ENCODE measurements at regions of chr2 and their contacts with region 1.

Region 1: DNA sequence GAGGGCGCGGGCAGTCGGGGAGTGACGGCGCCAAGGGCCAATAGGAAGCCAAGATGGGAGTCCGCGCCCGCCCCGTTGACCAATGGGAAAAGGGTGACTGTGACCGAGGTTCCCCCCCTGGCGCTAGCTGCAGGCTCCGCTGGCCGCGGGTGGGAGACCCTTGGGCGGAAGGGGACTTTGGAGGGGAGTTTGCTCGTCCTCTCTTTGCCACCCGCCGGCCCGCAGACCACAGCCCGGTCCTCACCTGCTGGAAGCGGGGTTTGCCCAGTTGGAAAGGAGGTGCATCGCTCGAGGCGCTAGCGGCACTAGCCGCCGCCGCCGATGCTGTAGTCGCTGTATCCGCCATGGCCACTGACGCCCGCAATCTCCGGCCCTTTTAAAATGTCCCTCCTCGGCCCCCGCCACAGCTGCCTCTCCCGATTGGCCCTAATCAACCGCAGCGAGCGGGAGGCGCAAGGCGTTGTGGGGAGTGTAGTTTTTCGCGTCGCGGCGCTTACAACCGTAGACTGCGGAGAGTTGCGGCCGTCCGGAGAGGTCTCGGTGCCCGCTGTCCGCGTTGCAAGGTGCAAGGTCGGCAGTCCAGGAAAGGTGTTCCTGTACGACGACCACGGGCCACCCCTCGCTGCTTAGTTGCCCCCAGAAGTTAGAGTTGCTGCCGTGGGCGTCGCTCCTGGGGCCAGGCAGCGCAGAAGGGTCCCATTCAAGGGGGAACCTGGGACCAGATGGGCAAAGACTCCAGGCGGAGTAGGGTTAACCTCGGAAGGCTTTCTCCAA is at the start of gene SFXN5:
- DNase-seq: peak; percentile 98 to 100 (median 99)
- ATAC-seq: peak; percentile 96 to 98 (median 96)
- H3K4me3 ChIP-seq: peak within 1 kb of the TSS; percentile 57 to 99 (median 87)
- H3K27ac ChIP-seq: peak within 1 kb of the TSS; percentile 74 to 98 (median 93)
- H3K4me1 ChIP-seq: peaks cover 3 to 39% (median 21%) of the 10 kb centered on the region in 12 donors
- H3K27me3 ChIP-seq: no peaks in the 10 kb centered on the region
- CTCF ChIP-seq: peak in 8 of 12 donors; percentile 13 to 50 (median 30)
- POLR2A ChIP-seq: no peak
- total RNA-seq, gene SFXN5: 6.0 to 12.5 (median 9.1) TPM

Region 2: DNA sequence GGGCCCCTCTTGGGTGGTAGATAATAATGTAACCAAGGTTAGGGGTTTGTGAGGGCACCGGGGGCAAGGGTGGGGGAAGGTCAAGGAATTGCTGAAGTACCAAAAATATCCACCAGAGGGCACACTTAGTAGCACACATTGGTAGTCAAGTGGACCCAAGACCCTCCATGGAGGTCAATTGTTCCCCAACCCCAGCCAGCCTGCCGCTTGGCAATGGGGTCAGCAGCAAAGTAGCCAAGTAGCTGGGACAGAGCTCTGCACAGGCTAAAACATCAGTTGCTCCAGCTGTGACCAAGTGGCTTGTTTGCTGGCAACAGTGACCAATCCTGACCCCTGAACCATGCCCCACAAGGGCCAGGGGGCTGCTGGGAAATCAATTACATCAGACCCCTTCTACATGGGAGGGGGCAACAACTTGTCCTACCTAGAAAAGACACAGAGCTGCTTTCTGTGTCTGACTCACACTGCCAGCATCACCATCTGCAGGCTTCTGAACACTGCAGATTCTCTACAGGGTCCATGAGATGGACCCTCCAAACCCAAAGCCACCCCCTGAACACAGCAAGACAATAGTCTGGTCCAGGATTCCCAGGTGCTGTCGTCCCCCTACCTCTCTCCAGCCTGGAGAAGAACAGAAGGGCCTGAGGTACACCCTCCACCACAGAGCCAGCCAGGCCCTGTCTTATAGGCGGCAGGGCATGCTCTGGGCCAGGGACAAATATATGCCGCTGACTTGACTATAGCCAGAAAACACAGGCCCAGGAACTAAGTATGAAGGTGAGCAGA is 78.2 kb before region 1 on chr2:
- intact Hi-C with region 1: loop called in 5 of 10 experiments (anchors 2 to 5 kb)
- DNase-seq: peak in 1 of 5 donors; percentile 23
- ATAC-seq: peak in 2 of 4 donors; percentile 12 to 36
- H3K4me3 ChIP-seq: no peak overlapping the region
- H3K27ac ChIP-seq: no peak overlapping the region
- H3K4me1 ChIP-seq: peaks cover 0 to 11% (median 2%) of the 10 kb centered on the region in 12 donors
- H3K27me3 ChIP-seq: no peaks in the 10 kb centered on the region
- CTCF ChIP-seq: peak; percentile 64 to 87 (median 78)
- POLR2A ChIP-seq: no peak

Region 3: DNA sequence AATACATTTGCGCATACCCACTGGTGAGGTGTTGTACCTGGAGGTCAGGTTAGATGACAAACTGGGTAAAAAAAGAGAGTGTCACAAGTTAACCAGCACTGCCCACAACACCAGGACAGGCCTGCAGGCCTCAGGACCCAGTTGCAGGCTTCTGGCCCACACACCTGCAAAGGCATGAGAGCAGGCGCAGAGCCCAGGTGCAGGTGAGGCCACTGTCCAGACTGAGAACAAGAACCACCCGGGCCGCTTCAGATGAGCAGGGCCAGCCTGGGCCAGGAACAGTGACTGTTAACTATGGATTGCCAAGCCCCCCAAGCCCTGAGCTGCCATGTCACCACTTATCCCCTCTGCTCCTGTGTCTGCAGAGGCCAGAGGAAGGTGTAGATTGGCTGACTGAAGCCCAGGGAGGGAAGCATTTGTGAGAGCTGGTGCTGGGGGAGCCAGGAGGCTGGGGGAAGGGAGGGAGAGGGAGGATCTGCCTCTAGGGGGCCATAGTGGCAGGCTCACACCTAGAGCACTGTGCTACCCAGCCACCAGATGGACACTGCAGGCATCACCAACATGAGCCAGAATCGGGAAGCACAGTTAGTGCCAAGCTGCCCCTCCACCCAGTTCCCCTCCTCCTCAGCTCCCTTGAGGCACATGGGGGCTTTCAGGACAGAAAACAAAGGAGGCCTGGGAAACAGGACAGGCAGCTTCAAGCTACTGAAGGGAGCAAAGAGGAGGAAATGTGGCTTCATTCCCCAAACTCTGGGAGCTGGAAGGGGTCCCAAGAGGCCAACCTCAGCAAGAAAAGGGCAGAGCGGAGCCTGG is 35.4 kb before region 1 on chr2:
- intact Hi-C with region 1: no loop called
- DNase-seq: no peak
- ATAC-seq: peak in 1 of 4 donors; percentile 10
- H3K4me3 ChIP-seq: no peak overlapping the region
- H3K27ac ChIP-seq: no peak overlapping the region
- H3K4me1 ChIP-seq: peaks cover 0 to 11% (median 0%) of the 10 kb centered on the region in 12 donors
- H3K27me3 ChIP-seq: no peaks in the 10 kb centered on the region
- CTCF ChIP-seq: no peak
- POLR2A ChIP-seq: no peak

Region 4: DNA sequence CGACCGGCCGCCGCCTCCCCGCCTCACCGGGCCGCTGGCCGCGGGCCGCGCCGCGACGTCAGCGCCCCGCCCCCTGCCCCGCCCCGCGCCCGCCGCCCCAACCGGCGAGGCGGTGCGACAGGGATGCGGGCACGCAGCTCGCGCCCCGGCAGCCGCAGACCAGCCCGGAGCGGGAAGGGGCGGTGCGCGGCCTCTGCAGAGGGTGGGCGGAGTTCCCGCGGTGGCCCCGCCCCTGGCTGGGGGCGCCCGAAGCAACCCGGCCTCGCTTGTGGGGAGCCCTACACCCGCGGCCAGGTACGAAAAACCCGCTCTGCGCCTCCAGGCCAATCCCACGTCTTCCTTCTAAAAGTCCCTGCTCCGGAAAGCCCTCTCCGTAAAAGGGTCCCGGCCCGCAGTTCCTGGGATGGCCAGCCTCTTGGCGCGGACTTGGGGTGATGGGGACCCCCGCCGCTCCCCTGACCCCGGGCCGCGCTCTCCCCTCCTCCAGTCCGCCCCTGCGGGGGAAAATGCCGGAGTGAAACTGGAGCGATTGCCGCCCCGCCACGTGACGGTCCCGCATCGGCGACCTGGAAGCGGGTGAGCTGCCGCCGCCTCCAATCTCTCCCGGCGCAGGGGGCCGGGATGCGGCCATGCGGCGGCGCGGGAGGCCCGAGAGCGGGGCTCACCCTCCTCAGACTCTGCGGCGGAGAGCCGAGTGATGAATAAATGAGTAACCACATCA is 41.5 kb after region 1 on chr2 and contains the start of gene RAB11FIP5:
- intact Hi-C with region 1: loop called in 1 of 10 experiments (anchors 5 kb)
- DNase-seq: peak; percentile 69 to 89 (median 77)
- ATAC-seq: peak; percentile 68 to 88 (median 80)
- H3K4me3 ChIP-seq: peak within 1 kb of the TSS; percentile 75 to 96 (median 88)
- H3K27ac ChIP-seq: peak within 1 kb of the TSS; percentile 15 to 90 (median 82)
- H3K4me1 ChIP-seq: peaks cover 0 to 40% (median 23%) of the 10 kb centered on the region in 12 donors
- H3K27me3 ChIP-seq: peaks cover 0 to 7% (median 0%) of the 10 kb centered on the region in 9 donors
- CTCF ChIP-seq: peak in 1 of 12 donors; percentile 16
- POLR2A ChIP-seq: peak in 1 of 2 donors; percentile 14
- total RNA-seq, gene RAB11FIP5: 18.6 to 43.7 (median 24.8) TPM

Region 5: DNA sequence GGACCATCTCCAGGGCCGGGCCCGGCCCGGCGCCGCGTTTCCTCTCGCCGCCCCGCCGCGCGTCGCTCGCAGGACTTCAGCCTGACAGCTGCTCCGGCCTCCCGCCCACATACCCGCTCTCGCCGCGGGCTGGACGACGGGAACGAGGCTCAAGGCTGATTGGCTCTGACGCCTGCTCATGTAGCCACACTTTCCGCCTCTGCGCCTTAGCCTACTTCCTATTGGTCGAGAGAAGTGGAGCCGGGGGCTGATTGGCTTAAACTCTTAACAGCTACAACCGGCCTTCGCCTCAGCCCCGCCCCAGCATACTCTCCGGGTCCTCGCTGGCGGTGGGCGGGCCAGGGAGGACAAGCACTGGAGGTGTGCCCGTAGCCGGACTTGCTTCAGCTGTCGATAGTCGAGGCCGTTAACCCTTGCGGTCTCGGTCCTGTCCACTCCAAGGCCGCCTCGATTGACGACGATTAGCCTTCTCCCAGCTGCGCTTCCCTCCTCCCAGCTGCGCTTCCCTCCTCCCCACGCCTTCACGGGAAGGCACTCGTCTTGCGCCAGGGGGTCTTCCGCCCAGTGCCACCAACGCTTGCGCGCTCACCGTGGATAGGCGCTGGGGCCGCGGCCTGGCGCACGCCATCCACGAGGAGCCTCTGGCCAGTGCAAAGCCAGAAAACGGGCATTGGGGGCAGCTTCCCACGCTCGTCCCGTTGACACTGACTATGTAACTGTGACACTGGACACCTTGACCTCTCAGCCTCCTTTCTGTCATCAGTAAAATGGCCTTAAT is 161.8 kb after region 1 on chr2 and contains the start of gene PRADC1:
- intact Hi-C with region 1: loop called in 1 of 10 experiments (anchors 2 kb)
- DNase-seq: peak; percentile 98 to 99 (median 99)
- ATAC-seq: peak; percentile 93 to 97 (median 96)
- H3K4me3 ChIP-seq: peak within 1 kb of the TSS; percentile 60 to 92 (median 78)
- H3K27ac ChIP-seq: peak within 1 kb of the TSS; percentile 77 to 98 (median 94)
- H3K4me1 ChIP-seq: peaks cover 0 to 43% (median 30%) of the 10 kb centered on the region in 12 donors
- H3K27me3 ChIP-seq: no peaks in the 10 kb centered on the region
- CTCF ChIP-seq: no peak
- POLR2A ChIP-seq: peak in 1 of 2 donors; percentile 85
- total RNA-seq, gene PRADC1: 57.2 to 153 (median 85.1) TPM